ENCODE measurements at regions of chr9 and their contacts with region 1.

Region 1: GRCh38 chr9:81477669-81478068 is 211.7 kb downstream of the TLE1 start:
- DNase-seq: no peak
- ATAC-seq: no peak
- H3K4me3 ChIP-seq: no peak overlapping the region
- H3K27ac ChIP-seq: no peak overlapping the region
- H3K4me1 ChIP-seq: no peaks in the 10 kb centered on the region
- H3K27me3 ChIP-seq: no peaks in the 10 kb centered on the region; a peak in 2 of 5 replicates
- CTCF ChIP-seq: no peak
- EP300 ChIP-seq: no peak
- POLR2A ChIP-seq: no peak
- RAD21 ChIP-seq: no peak

Region 2: DNA sequence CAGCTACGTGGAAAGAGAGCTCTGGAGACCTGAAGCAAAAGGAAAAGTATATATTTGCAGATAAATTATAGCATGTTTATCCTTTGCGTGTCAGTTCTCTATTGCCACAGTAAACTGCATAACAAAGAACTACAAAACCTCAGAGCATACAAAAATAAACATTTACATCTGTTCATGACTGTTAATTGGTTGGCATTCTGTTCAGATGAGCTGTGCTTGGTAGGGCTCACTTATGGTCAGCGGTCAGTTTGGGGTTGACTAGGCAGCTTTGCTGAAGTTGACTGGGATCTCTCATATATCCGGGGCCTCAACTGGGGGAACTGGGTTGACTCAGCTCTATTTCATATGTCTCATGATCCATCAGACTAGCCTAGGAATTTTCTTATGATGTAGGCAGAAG is 46.0 kb before region 1 on chr9:
- CTCF ChIA-PET with region 1: no interaction called
- POLR2A ChIA-PET with region 1: no interaction called
- in situ Hi-C with region 1: no loop called
- intact Hi-C with region 1: loop called (anchors 2 kb)
- DNase-seq: no peak
- ATAC-seq: no peak
- H3K4me3 ChIP-seq: no peak overlapping the region
- H3K27ac ChIP-seq: no peak overlapping the region
- H3K4me1 ChIP-seq: no peaks in the 10 kb centered on the region
- H3K27me3 ChIP-seq: no peaks in the 10 kb centered on the region
- CTCF ChIP-seq: no peak
- EP300 ChIP-seq: no peak
- POLR2A ChIP-seq: no peak
- RAD21 ChIP-seq: no peak

Region 3: GRCh38 chr9:81861644-81862043 is 384.0 kb after region 1 on chr9:
- CTCF ChIA-PET with region 1: no interaction called
- POLR2A ChIA-PET with region 1: no interaction called
- in situ Hi-C with region 1: no loop called
- intact Hi-C with region 1: no loop called
- DNase-seq: no peak
- ATAC-seq: no peak
- H3K4me3 ChIP-seq: no peak overlapping the region
- H3K27ac ChIP-seq: no peak overlapping the region
- H3K4me1 ChIP-seq: no peaks in the 10 kb centered on the region
- H3K27me3 ChIP-seq: no peaks in the 10 kb centered on the region
- CTCF ChIP-seq: no peak
- EP300 ChIP-seq: no peak
- POLR2A ChIP-seq: no peak
- RAD21 ChIP-seq: no peak